ENCODE measurements at regions of chr9 and their contacts with region 1.

Region 1: GRCh38 chr9:32823551-32823950 is 40.2 kb downstream of the TMEM215 start:
- DNase-seq: no peak
- H3K4me3 Mint-ChIP-seq: no peak overlapping the region
- H3K27ac Mint-ChIP-seq: no peak overlapping the region
- H3K4me1 Mint-ChIP-seq: no peaks in the 10 kb centered on the region
- H3K27me3 Mint-ChIP-seq: peaks cover 6% of the 10 kb centered on the region

Region 2: DNA sequence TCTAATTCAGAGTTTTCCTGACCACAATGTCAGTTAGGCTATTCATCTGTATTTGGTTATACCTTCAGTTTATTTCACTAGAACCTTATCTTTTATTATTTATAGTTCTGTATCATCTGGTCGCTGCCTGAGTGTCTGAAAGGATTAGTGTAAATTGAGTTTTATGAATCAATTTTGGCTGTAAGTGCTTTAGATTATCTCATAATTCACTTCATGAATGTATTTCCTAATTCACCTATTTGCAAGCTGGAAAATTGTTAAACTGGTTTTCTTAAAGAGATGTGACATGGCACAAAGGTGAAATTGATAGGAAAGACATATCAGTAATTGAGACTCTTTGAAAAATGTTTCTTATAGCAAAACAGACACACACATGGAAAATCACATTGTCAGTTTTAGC is 681.5 kb before region 1 on chr9:
- intact Hi-C with region 1: loop called (anchors 5 kb)
- DNase-seq: no peak
- H3K4me3 Mint-ChIP-seq: no peak overlapping the region
- H3K27ac Mint-ChIP-seq: no peak overlapping the region
- H3K4me1 Mint-ChIP-seq: no peaks in the 10 kb centered on the region
- H3K27me3 Mint-ChIP-seq: no peaks in the 10 kb centered on the region

Region 3: DNA sequence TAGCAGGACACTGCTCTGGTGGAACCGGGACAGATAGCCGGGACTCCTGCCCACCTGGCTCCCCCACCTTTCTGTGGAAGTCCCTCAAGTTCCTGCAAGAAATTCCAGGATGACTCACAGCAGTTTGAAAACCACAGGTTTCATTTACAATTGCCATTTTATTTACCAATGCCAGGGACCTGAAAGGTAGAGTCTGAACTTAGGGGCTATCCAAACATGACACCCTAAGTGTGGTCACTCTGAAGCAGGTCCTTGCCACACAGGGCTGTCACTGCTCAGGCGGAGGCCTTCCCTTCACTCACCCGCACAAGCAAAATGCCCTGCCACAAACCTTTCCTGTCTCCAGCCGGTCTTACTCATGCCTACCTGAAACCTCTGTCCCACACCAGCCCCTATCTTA is 124.8 kb before region 1 on chr9:
- intact Hi-C with region 1: no loop called
- DNase-seq: no peak
- H3K4me3 Mint-ChIP-seq: no peak overlapping the region
- H3K27ac Mint-ChIP-seq: no peak overlapping the region
- H3K4me1 Mint-ChIP-seq: no peaks in the 10 kb centered on the region
- H3K27me3 Mint-ChIP-seq: peaks cover 4% of the 10 kb centered on the region

Region 4: GRCh38 chr9:32854271-32854670 is 30.7 kb after region 1 on chr9:
- intact Hi-C with region 1: no loop called
- DNase-seq: no peak
- H3K4me3 Mint-ChIP-seq: no peak overlapping the region
- H3K27ac Mint-ChIP-seq: no peak overlapping the region
- H3K4me1 Mint-ChIP-seq: no peaks in the 10 kb centered on the region
- H3K27me3 Mint-ChIP-seq: peaks cover 13% of the 10 kb centered on the region

Region 5: DNA sequence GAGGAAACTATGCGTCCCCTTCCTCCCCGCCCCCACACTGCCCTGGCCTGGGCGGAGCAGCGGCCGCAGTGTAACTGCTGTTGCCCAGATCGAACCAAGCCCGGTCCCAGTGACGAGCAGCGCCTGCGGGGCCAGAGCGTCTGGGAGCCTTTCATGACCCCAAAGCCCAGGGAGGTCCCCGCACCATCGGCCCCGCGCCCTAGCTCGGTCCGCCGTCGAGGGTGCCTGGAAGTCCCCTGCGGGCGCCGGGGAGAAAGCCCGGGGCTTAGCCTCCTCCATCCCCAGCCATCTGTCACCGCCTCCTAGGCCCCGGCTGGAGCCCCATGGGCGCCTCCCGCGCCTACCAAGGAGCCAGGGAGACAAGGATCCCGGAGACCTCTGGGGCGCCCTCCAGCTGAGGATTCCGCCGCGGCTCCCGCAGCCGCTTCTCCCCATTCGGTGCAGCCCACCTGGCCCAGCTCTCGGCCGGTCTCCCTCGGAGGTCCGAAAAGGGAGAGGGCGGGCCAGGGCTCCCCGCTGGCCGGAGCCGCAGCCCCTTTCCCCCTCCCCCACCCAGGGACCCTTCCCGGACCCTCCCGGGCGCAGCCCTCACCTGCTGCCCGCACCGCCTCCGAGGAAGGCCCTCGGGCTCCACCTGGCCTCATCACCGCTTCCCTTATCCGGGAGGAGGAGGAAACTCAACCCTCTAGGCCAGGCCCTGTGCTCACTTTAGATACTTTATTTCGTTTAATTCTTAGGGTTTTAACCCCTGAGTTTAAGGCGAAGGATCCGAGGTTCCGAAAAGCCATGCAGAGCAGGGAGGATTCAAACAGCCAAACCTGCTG is 132.3 kb after region 1 on chr9:
- intact Hi-C with region 1: no loop called
- DNase-seq: no peak
- H3K4me3 Mint-ChIP-seq: no peak overlapping the region
- H3K27ac Mint-ChIP-seq: no peak overlapping the region
- H3K4me1 Mint-ChIP-seq: no peaks in the 10 kb centered on the region
- H3K27me3 Mint-ChIP-seq: no peaks in the 10 kb centered on the region

Measured in activated T-helper 1 cell treated with anti-CD3 and anti-CD28 coated beads, Interleukin-12 subunit alpha, Interleukin-12 subunit beta, Interleukin-2, Interleukin-4 antibody, amounts not matched to agents 30 ng/mL and 10 ng/mL and 1 ng/mL, durations not matched to agents 14 hours and 24 hours and 36 hours (primary cell).